CD14-positive monocyte (primary cell): ENCODE measurements at regions of chr11 and their contacts with region 1.

Region 1: DNA sequence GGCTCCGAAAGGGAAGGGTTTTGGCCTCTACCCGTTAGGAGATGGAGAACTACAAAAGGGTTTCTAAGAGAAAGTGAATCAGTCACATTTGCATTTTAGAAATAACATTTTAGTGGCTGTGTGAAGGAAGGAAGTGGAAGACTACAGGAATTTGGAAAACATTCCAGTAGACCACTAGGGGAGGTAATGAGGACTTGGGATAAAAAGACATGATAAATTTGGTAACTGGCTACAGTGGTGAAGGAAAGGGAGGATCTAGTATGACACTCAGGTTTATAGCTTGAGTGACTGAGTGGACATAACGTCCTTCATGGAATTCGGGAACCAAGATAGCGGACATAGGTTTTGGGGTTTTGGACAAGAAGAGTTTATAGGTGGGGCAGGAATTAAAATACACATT is 7.0 kb upstream of the RRM1 start:
- DNase-seq: no peak
- H3K4me3 ChIP-seq: no peak overlapping the region
- H3K4me3 Mint-ChIP-seq: no peak overlapping the region
- H3K27ac ChIP-seq: no peak overlapping the region
- H3K27ac Mint-ChIP-seq: no peak overlapping the region
- H3K4me1 ChIP-seq: peaks cover 11 to 20% of the 10 kb centered on the region in 2 donors
- H3K4me1 Mint-ChIP-seq: peaks cover 24% of the 10 kb centered on the region
- H3K27me3 ChIP-seq: no peaks in the 10 kb centered on the region
- H3K27me3 Mint-ChIP-seq: peaks cover 0 to 1% (median 0%) of the 10 kb centered on the region in 3 donors
- CTCF ChIP-seq: no peak

Region 2: GRCh38 chr11:3920148-3920852 is 167.3 kb before region 1 on chr11:
- intact Hi-C with region 1: no loop called
- DNase-seq: peak; percentile 84 to 92 (median 91)
- H3K4me3 ChIP-seq: peak overlapping the region in 1 of 3 experiments; percentile 54
- H3K4me3 Mint-ChIP-seq: no peak overlapping the region
- H3K27ac ChIP-seq: peak overlapping the region; percentile 78 to 97
- H3K27ac Mint-ChIP-seq: peak overlapping the region; percentile 92 to 99 (median 97)
- H3K4me1 ChIP-seq: peaks cover 59 to 72% of the 10 kb centered on the region in 2 donors
- H3K4me1 Mint-ChIP-seq: peaks cover 62% of the 10 kb centered on the region
- H3K27me3 ChIP-seq: no peaks in the 10 kb centered on the region
- H3K27me3 Mint-ChIP-seq: no peaks in the 10 kb centered on the region
- CTCF ChIP-seq: no peak

Region 3: GRCh38 chr11:3984896-3985295 is 102.7 kb before region 1 on chr11:
- intact Hi-C with region 1: loop called in 1 of 2 experiments (anchors 10 kb)
- DNase-seq: no peak
- H3K4me3 ChIP-seq: no peak overlapping the region
- H3K4me3 Mint-ChIP-seq: no peak overlapping the region
- H3K27ac ChIP-seq: peak overlapping the region in 1 of 2 donors; percentile 5
- H3K27ac Mint-ChIP-seq: peak overlapping the region in 2 of 7 donors; percentile 45 to 75
- H3K4me1 ChIP-seq: no peaks in the 10 kb centered on the region
- H3K4me1 Mint-ChIP-seq: peaks cover 19% of the 10 kb centered on the region
- H3K27me3 ChIP-seq: no peaks in the 10 kb centered on the region
- H3K27me3 Mint-ChIP-seq: no peaks in the 10 kb centered on the region
- CTCF ChIP-seq: no peak

Region 4: DNA sequence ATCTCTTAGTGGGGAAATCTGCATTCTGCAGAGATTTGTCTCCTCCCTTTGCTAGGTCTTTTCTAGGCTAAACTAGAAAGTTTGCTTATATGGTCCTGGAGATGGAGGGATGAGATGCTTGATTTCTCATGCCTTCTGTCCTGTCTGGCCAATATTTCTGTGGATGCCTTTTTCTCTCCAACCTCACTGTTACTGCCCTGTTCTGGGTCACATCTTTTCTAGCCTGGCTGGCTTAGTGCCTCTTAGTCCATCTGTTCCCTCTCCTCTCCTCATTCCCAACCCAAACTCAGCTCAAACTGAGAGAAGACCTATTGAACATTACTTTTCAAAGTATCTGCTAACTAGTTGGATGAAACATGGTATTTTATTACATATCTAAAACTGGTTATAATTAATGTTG is 69.0 kb after region 1 on chr11:
- intact Hi-C with region 1: no loop called
- DNase-seq: no peak
- H3K4me3 ChIP-seq: no peak overlapping the region
- H3K4me3 Mint-ChIP-seq: no peak overlapping the region
- H3K27ac ChIP-seq: no peak overlapping the region
- H3K27ac Mint-ChIP-seq: no peak overlapping the region
- H3K4me1 ChIP-seq: no peaks in the 10 kb centered on the region
- H3K4me1 Mint-ChIP-seq: no peaks in the 10 kb centered on the region
- H3K27me3 ChIP-seq: no peaks in the 10 kb centered on the region
- H3K27me3 Mint-ChIP-seq: peaks cover 0 to 5% (median 2%) of the 10 kb centered on the region in 3 donors
- CTCF ChIP-seq: no peak